Aorta (tissue), 5 donors: ENCODE measurements at regions of chr11 and their contacts with region 1.

Region 1: DNA sequence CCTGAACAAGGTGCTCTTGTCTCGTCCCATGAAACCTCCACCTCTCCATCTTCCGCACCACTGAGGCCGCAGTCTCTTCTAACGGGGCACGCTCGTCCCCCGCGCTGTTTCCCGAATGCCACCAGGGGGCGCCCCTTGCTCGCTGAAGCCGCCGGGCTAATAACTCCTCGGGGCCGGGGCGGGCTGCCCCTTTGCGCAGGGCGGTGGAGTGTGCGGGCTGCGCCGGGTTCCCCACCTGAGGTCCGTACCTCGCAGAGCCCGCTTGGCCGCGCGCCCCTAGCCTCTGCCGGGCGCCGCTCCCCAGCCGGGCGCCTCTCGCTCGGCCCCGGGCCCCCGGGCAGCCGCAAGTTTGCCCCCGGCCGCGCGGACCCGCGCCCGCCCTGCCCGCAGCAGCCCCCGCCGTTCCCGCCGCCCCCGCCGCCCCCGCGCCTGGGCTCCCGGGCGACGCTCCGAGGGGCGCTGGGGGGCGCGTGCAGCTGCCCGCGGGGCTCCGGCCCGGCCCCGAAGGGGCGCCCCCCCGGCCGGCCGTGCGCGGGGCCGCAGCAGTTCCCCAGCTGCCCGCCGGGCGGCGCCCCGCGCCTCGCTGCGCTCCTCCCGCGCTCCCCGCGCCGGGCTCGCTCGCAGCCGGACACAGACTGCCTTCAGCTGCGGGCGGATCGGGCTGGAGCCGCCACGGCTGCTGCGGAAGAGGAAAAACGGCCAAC is at the start of gene GRIK4:
- DNase-seq: peak; percentile 86 to 96
- ATAC-seq: peak; percentile 92
- H3K4me3 ChIP-seq: peak within 1 kb of the TSS; percentile 53 to 54
- H3K27ac ChIP-seq: no peak within 1 kb of the TSS
- H3K4me1 ChIP-seq: no peaks in the 10 kb centered on the region
- H3K27me3 ChIP-seq: no peaks in the 10 kb centered on the region
- total RNA-seq, gene GRIK4: not detected

Region 2: GRCh38 chr11:120682866-120683265 is 171.6 kb after region 1 on chr11:
- intact Hi-C with region 1: loop called (anchors 1 to 5 kb)
- DNase-seq: no peak
- ATAC-seq: no peak
- H3K4me3 ChIP-seq: no peak overlapping the region
- H3K27ac ChIP-seq: no peak overlapping the region
- H3K4me1 ChIP-seq: no peaks in the 10 kb centered on the region
- H3K27me3 ChIP-seq: no peaks in the 10 kb centered on the region

Region 3: DNA sequence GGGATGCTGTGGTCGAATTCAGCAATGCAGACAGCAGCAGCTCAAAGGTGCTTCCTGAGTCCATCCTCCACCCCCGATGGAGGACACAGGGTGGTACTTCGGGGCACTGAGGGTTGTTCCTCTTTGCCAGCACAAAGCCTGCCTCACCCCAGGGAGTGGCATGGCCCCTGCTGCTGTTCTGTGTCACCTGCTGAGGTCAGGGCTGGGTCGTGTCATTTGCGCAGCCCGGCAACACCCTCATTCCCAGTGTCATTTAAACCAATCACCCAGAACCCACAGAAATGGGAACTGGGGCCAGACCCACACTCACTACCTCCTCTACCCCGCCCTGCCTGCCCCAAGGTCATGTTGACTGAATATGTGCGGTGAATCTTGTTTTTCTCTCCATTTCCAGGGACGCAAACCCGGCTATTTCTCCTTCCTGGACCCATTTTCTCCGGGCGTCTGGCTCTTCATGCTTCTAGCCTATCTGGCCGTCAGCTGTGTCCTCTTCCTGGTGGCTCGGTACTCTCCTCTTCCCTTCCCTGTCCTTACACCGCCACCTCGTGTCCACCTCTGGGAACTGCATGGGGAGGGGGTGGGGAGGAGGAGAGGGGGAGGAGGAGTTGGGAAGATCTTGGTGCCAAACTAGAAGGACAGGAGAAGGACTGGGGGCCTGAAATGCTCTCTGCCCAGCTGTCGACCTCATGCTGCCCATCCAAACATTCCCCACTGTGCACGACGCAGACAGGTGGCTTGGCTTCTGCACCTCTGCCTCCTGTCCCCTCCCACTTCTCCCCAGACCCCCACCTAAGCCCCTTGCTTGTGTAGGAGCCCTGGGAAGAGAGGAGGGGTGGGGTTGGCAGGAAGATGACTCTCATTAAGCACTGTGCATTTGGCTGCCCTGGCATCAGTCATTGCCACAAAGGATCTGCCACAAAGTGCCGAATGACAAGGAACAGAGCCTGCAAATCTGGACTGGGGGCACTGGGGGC is 441.5 kb after region 1 on chr11:
- intact Hi-C with region 1: loop called (anchors 1 to 5 kb)
- DNase-seq: peak; percentile 78 to 89
- ATAC-seq: peak; percentile 83
- H3K4me3 ChIP-seq: no peak overlapping the region
- H3K27ac ChIP-seq: no peak overlapping the region
- H3K4me1 ChIP-seq: no peaks in the 10 kb centered on the region
- H3K27me3 ChIP-seq: peaks cover 0 to 1% of the 10 kb centered on the region in 2 donors

Region 4: DNA sequence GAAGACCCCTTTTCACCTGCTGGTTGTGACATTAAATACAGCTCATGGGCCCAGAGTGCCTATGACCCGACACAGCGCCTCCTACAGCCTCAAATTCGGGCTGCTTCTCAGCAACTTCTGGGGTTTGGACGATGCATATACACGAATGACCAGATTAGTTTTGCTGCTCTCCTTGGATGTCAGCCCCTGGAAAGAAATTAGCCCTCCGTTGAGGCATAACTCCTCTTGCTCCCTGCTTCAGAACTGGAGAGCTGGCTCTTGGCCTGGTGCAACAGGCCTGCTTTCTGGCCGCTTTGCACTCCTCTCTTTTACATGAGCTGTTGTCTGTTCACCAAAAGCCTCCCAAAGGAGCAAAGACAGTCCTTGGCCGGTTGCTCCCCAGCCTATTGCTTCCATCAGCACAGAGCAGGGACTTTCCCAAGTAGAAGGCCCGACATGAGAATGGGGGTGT is 593.1 kb after region 1 on chr11:
- intact Hi-C with region 1: loop called in 1 of 2 experiments (anchors 10 kb)
- DNase-seq: no peak
- ATAC-seq: peak; percentile 64
- H3K4me3 ChIP-seq: no peak overlapping the region
- H3K27ac ChIP-seq: no peak overlapping the region
- H3K4me1 ChIP-seq: peaks cover 0 to 2% of the 10 kb centered on the region in 2 donors
- H3K27me3 ChIP-seq: no peaks in the 10 kb centered on the region

Region 5: DNA sequence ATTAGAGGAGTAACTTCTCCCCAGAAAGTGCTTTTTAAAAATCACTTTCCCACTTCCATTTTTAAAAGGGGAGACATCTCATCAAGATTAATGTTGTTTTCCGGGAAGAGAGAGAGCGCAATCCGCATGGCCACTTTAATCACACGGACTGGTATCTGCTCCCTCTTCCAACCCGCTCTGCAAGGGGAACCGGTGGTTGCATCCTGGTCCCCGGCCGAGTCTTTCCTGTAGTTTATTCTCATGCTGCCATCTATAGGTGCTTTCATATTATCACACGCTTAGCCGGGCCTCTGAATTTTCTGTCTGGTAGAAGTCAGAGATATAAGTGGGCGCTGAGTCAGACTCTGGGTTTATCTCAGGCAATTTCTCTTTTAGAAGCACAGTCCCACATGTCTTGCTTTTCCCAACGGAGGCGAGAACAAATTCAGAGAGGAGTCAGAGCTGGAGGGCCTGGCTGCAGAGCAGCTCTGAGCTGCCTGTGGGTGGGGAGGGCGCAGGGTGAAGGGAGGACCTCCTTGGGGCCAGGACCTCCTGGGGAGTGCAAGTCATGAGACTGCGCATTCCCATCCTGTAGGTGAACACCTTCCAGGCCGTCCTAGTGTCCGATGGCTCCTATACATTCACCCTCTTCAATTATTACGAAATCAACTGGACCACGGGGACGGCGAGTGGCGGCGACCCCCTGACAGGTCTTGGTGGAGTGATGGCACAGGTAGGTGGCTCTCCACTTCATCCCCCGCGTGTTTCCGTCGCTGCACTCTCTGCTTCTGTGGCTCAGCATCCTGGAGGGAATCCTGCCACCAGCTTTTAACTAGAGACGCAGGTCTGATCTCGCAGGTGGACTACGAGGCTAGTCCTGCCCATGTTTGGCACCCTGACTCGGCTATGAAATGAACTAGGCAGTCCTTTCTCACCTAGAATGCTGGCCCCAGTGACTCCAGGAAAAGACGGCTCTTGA is 601.5 kb after region 1 on chr11:
- intact Hi-C with region 1: loop called (anchors 5 to 10 kb)
- DNase-seq: peak in 1 of 2 donors; percentile 77
- ATAC-seq: peak; percentile 81
- H3K4me3 ChIP-seq: no peak overlapping the region
- H3K27ac ChIP-seq: no peak overlapping the region
- H3K4me1 ChIP-seq: no peaks in the 10 kb centered on the region
- H3K27me3 ChIP-seq: no peaks in the 10 kb centered on the region

Region 6: DNA sequence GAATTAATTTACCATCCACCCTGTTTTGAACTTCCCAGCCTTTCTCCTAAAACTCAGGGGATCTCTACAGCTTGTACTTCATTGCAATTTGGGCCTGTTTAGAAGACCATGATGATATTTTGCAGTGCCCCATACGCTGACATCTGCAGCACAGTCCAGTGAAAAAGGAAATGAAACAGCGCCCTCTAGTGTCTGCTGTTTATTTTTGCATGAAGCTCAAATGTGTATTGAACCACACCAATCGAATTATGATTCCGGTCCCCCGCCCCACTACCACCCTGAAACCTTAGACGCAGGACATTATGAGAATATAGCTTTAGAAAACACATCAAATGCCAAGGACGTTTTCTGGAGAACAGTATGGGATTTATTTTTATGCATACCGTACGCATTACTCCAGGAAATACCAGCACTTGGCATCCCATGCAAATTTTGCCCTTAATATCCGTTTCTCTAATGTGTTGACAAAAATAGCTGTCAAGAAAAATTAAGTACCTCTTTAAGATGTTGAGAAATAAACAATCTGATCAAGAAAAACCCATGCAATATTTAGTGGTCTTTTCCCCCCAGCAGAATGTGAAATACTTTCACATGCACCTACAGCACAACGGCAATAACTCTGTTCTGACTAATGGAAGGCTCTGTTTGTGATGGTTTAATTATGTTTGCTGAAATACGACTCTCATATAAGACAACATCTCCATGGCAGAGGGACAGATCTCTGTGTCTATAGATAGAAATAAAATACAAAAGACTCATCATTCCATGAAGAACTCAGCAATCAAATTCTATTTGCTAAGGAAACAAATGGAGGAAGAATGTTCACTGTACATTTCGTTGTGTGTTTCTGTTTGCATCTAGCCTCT is 683.7 kb after region 1 on chr11:
- intact Hi-C with region 1: loop called (anchors 5 to 10 kb)
- DNase-seq: no peak
- ATAC-seq: peak; percentile 82
- H3K4me3 ChIP-seq: no peak overlapping the region
- H3K27ac ChIP-seq: no peak overlapping the region
- H3K4me1 ChIP-seq: no peaks in the 10 kb centered on the region
- H3K27me3 ChIP-seq: no peaks in the 10 kb centered on the region